Activated naive CD4-positive, alpha-beta T cell treated with anti-CD3 and anti-CD28 coated beads for 36 hours (primary cell): ENCODE measurements at regions of chr7 and their contacts with region 1.

Region 1: GRCh38 chr7:143416565-143417149 is 8.0 kb upstream of the EPHA1 start:
- DNase-seq: no peak
- H3K4me3 Mint-ChIP-seq: no peak overlapping the region
- H3K27ac Mint-ChIP-seq: no peak overlapping the region
- H3K4me1 Mint-ChIP-seq: peaks cover 22% of the 10 kb centered on the region
- H3K27me3 Mint-ChIP-seq: no peaks in the 10 kb centered on the region

Region 2: GRCh38 chr7:142855424-142856318 is 561.0 kb before region 1 on chr7:
- CTCF ChIA-PET with region 1: no interaction called
- intact Hi-C with region 1: no loop called
- DNase-seq: no peak
- H3K4me3 Mint-ChIP-seq: peak overlapping the region; percentile 73
- H3K27ac Mint-ChIP-seq: no peak overlapping the region
- H3K4me1 Mint-ChIP-seq: peaks cover 33% of the 10 kb centered on the region
- H3K27me3 Mint-ChIP-seq: no peaks in the 10 kb centered on the region

Region 3: DNA sequence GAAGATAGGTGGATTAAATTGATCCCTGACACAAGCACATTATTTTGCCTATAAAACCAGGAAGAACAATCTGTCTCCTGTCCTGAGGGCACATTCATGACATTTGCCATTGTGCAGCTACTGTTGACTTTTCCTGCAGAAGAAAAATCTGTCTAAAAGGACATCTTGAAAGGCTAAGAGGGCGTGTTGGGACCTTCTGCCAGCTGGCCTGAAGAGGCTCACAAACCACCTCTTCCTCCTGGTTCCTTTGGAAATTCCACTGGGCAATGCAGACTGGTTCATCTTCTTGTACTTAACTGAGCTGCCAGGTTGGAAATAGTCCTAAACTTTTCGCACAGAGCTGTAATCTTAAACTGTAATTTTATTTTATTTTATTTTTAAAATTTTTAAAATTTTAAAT is 320.5 kb before region 1 on chr7:
- CTCF ChIA-PET with region 1: no interaction called
- intact Hi-C with region 1: no loop called
- DNase-seq: no peak
- H3K4me3 Mint-ChIP-seq: no peak overlapping the region
- H3K27ac Mint-ChIP-seq: no peak overlapping the region
- H3K4me1 Mint-ChIP-seq: no peaks in the 10 kb centered on the region
- H3K27me3 Mint-ChIP-seq: peaks cover under 1% of the 10 kb centered on the region

Region 4: DNA sequence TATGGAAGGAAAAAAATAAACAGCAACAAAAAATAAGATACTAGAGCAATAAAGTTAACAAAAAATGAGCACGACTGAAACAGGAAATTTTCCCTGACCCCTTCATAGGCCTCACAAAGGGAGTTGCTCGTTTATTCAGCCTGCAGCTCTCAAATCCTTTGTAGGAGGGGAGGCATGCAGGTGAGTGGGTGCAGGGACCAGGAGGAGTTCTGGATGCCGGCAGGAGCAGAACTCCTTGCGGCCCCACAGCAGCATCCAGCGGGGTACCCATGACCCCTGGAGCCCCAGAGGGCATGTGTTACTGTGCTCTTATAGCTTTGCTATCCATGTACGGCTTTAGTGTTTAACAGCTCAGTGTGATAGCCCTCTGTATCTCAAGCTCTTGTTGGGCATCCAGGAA is 227.7 kb before region 1 on chr7:
- CTCF ChIA-PET with region 1: no interaction called
- intact Hi-C with region 1: no loop called
- DNase-seq: no peak
- H3K4me3 Mint-ChIP-seq: no peak overlapping the region
- H3K27ac Mint-ChIP-seq: no peak overlapping the region
- H3K4me1 Mint-ChIP-seq: no peaks in the 10 kb centered on the region
- H3K27me3 Mint-ChIP-seq: peaks cover 4% of the 10 kb centered on the region

Region 5: GRCh38 chr7:143299840-143300239 is 116.8 kb before region 1 on chr7:
- CTCF ChIA-PET with region 1: interaction called, 14 read pairs
- intact Hi-C with region 1: loop called (anchors 2 kb)
- DNase-seq: peak; percentile 72
- H3K4me3 Mint-ChIP-seq: no peak overlapping the region
- H3K27ac Mint-ChIP-seq: peak overlapping the region; percentile 15
- H3K4me1 Mint-ChIP-seq: peaks cover 31% of the 10 kb centered on the region
- H3K27me3 Mint-ChIP-seq: no peaks in the 10 kb centered on the region

Region 6: DNA sequence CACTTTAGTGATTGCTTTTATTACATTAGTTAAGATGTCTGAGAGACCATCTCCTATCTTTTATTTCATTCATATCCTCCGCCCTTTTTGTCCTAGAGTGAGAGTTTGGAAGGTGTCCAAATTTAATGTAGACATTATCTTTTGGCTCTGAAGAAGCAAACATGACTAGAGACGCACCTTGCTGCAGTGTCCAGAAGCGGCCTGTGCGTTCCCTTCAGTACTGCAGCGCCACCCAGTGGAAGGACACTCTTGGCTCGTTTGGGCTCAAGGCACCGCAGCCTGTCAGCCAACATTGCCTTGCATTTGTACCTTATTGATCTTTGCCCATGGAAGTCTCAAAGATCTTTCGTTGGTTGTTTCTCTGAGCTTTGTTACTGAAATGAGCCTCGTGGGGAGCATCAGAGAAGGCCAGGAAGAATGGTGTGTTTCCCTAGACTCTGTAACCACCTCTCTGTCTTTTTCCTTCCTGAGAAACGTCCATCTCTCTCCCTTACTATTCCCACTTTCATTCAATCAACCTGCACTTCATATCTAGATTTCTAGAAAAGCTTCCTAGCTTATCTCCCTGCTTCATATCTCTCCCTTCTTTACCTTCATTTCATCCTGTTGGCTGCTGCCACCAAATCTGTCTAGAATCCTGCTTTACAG is 111.1 kb before region 1 on chr7:
- CTCF ChIA-PET with region 1: interaction called, 14 read pairs
- intact Hi-C with region 1: loop called (anchors 2 kb)
- DNase-seq: peak; percentile 83
- H3K4me3 Mint-ChIP-seq: no peak overlapping the region
- H3K27ac Mint-ChIP-seq: peak overlapping the region; percentile 71
- H3K4me1 Mint-ChIP-seq: peaks cover 41% of the 10 kb centered on the region
- H3K27me3 Mint-ChIP-seq: no peaks in the 10 kb centered on the region